Gastrocnemius medialis (tissue), 4 donors: ENCODE measurements at regions of chr16 and their contacts with region 1.

Region 1: DNA sequence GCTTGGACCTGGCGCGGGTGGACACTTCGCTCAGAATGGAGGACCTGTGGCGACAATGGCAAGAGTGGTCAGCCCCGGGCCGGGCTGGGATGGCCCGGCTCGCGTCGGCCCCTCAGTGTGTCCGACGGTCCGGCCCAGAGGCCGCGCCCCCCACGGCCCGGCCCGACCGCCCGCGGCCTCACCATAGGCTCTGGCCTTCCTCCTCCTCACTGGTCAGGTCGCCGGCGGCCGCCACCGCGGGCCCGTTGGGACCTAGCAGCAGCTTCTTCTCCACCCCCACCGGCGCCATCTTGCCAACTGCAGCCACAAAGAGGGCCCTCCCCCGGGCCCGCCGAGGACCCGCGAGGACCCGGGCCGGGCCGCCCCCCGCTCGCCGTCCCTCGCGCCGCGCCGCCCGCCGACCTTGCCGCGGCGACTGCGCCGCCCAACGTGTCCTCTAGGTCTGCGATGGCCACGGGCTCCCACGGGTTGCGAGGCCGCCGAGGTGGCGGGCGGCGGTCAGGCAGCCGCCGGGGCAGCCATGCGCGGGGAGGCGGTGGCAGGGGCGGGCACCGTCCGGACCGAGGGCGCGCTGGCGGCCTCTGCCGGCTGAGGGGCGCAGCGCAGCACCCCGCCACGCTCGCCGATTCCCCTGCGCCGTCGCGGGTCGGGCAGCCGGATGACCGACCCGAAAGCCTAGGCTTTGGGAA is at the start of gene DYNC1LI2:
- DNase-seq: peak; percentile 57 to 66
- ATAC-seq: peak; percentile 96 to 97
- H3K4me3 ChIP-seq: peak within 1 kb of the TSS; percentile 74 to 98 (median 91)
- H3K27ac ChIP-seq: peak within 1 kb of the TSS; percentile 78 to 96 (median 92)
- H3K4me1 ChIP-seq: peaks cover 15 to 25% of the 10 kb centered on the region in 2 donors
- H3K27me3 ChIP-seq: no peaks in the 10 kb centered on the region
- CTCF ChIP-seq: peak; percentile 73 to 99 (median 97)
- POLR2A ChIP-seq: peak in 1 of 2 donors; percentile 37
- total RNA-seq, gene DYNC1LI2: 57.4 to 80.3 (median 62.6) TPM

Region 2: GRCh38 chr16:66315210-66315825 is 436.1 kb before region 1 on chr16:
- in situ Hi-C with region 1: no loop called
- intact Hi-C with region 1: no loop called
- DNase-seq: peak; percentile 18 to 40
- ATAC-seq: peak; percentile 91
- H3K4me3 ChIP-seq: no peak overlapping the region
- H3K27ac ChIP-seq: no peak overlapping the region
- H3K4me1 ChIP-seq: no peaks in the 10 kb centered on the region
- H3K27me3 ChIP-seq: no peaks in the 10 kb centered on the region
- CTCF ChIP-seq: peak; percentile 66 to 87 (median 76)
- POLR2A ChIP-seq: no peak

Region 3: GRCh38 chr16:66660422-66661209 is 90.8 kb before region 1 on chr16:
- in situ Hi-C with region 1: no loop called
- intact Hi-C with region 1: loop called (anchors 2 kb)
- DNase-seq: peak; percentile 43 to 74
- ATAC-seq: peak; percentile 93 to 97
- H3K4me3 ChIP-seq: no peak overlapping the region
- H3K27ac ChIP-seq: peak overlapping the region; percentile 62 to 73 (median 68)
- H3K4me1 ChIP-seq: peaks cover 10 to 17% of the 10 kb centered on the region in 2 donors
- H3K27me3 ChIP-seq: no peaks in the 10 kb centered on the region
- CTCF ChIP-seq: peak in 1 of 5 experiments; percentile 33
- POLR2A ChIP-seq: no peak

Region 4: GRCh38 chr16:66696669-66697630 is 54.5 kb before region 1 on chr16 and contains the start of gene CMTM4:
- in situ Hi-C with region 1: no loop called
- intact Hi-C with region 1: loop called (anchors 1 kb)
- DNase-seq: peak; percentile 75 to 85
- ATAC-seq: peak; percentile 93
- H3K4me3 ChIP-seq: peak within 1 kb of the TSS; percentile 68 to 88 (median 81)
- H3K27ac ChIP-seq: peak within 1 kb of the TSS; percentile 65 to 81 (median 77)
- H3K4me1 ChIP-seq: peaks cover 8 to 14% of the 10 kb centered on the region in 2 donors
- H3K27me3 ChIP-seq: no peaks in the 10 kb centered on the region
- CTCF ChIP-seq: peak in 2 of 5 experiments; percentile 30 to 45
- POLR2A ChIP-seq: peak in 1 of 2 donors; percentile 21
- total RNA-seq, gene CMTM4: 5.7 to 15.0 (median 7.2) TPM

Region 5: DNA sequence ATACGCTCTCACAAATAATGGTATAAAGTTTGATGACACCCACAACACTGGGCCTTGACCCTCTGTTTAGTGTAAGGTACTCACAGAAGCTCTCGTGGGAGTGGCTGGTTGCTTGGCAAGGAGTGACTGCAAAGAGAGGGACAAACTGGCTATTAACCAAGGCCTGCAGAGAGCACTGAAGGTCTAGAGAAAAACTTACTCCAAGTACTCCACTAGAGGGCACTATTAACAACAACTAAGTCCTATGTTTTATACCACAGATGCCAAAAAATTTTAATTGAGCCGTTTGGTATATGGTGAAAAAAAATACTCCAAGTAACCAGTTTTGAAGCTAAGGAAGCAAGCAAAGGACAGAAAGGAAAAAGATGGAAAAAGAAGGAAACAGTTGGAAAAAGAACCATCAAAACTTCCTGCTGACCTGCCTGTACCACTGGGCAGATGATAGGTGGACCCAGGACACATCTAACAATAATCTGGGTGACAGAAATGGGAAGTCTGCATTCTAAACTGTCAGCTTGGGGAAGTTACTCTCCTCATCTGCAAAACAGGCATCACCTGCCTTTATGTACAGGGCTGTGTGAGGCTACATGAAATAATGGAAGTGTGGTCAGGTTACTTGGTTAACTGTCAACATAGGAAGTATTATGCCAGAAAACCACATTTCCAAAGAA is 23.2 kb before region 1 on chr16:
- in situ Hi-C with region 1: no loop called
- intact Hi-C with region 1: loop called (anchors 1 kb)
- DNase-seq: peak in 1 of 2 donors; percentile 25
- ATAC-seq: peak; percentile 85 to 92
- H3K4me3 ChIP-seq: no peak overlapping the region
- H3K27ac ChIP-seq: no peak overlapping the region
- H3K4me1 ChIP-seq: peaks cover 7% of the 10 kb centered on the region in 2 donors
- H3K27me3 ChIP-seq: no peaks in the 10 kb centered on the region
- CTCF ChIP-seq: peak; percentile 60 to 73 (median 65)
- POLR2A ChIP-seq: no peak

Region 6: DNA sequence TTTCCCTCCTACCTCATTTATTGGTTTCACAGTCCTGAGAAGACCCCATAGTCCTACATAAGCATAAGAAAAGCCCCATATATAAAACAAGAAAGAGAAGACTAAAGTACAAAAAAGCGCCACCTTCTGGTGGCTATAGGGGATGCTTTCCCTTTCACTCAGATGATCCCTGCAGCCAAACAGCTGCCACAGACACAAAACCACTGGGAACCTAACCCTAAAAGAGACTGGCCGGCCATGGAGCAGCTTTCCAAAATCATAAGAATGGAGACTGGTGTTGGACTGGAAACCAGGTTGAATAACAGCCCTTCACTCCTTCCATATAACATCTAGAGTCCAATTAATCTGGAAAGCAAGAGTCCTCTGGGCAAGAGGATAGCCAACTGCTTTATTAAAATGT is 11.4 kb before region 1 on chr16:
- in situ Hi-C with region 1: no loop called
- intact Hi-C with region 1: loop called (anchors 1 kb)
- DNase-seq: no peak
- ATAC-seq: no peak
- H3K4me3 ChIP-seq: no peak overlapping the region
- H3K27ac ChIP-seq: peak overlapping the region; percentile 77 to 88 (median 84)
- H3K4me1 ChIP-seq: peaks cover 48 to 50% of the 10 kb centered on the region in 2 donors
- H3K27me3 ChIP-seq: no peaks in the 10 kb centered on the region
- CTCF ChIP-seq: peak in 4 of 5 experiments; percentile 35 to 58 (median 46)
- POLR2A ChIP-seq: no peak